T-cell (primary cell): ENCODE measurements at regions of chr18 and their contacts with region 1.

Region 1: GRCh38 chr18:2994603-2995432 is 18.1 kb downstream of the LPIN2 start:
- DNase-seq: peak in 34 of 35 experiments; percentile 48 to 85 (median 72)
- ATAC-seq: peak; percentile 82 to 86 (median 85)
- H3K4me3 ChIP-seq: peak overlapping the region in 1 of 2 donors; percentile 7
- H3K4me3 Mint-ChIP-seq: peak overlapping the region; percentile 41 to 43 (median 43)
- H3K27ac ChIP-seq: peak overlapping the region; percentile 60
- H3K27ac Mint-ChIP-seq: peak overlapping the region; percentile 75 to 89
- H3K4me1 ChIP-seq: peaks cover 31 to 40% of the 10 kb centered on the region in 2 experiments
- H3K4me1 Mint-ChIP-seq: peaks cover 74 to 90% (median 82%) of the 10 kb centered on the region in 3 donors
- H3K27me3 ChIP-seq: no peaks in the 10 kb centered on the region
- H3K27me3 Mint-ChIP-seq: no peaks in the 10 kb centered on the region

Region 2: DNA sequence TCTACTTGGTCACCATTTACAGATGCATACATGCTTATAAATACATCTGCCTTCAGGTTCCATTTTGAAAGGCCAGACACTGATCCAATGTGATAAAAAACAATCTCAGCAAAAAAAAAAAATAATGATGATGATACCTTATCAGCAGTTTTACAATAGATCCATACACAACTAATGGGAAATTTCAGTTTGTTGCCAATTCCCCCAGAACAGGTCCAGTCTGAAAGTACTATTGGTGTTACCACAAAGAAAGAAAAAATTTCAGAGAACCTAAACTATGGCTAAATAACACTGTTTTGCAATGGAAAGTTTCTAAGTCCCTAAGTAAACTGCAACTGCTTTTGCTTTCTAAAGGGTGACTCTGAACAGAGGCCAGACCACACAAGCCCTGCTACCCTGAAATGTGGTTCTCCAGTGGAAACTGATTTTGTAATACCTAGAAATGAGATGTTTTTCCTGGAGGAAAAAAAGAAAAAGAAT is 36.0 kb before region 1 on chr18:
- CTCF ChIA-PET with region 1: interaction called in 1 of 2 experiments, 197 read pairs
- POLR2A ChIA-PET with region 1: interaction called, 4 read pairs
- DNase-seq: peak in 1 of 35 experiments; percentile 53
- ATAC-seq: peak in 1 of 4 experiments; percentile 18
- H3K4me3 ChIP-seq: no peak overlapping the region
- H3K4me3 Mint-ChIP-seq: peak overlapping the region; percentile 46 to 72 (median 62)
- H3K27ac ChIP-seq: peak overlapping the region; percentile 94
- H3K27ac Mint-ChIP-seq: peak overlapping the region; percentile 95
- H3K4me1 ChIP-seq: peaks cover 67 to 77% of the 10 kb centered on the region in 2 experiments
- H3K4me1 Mint-ChIP-seq: peaks cover 91 to 95% (median 94%) of the 10 kb centered on the region in 3 donors
- H3K27me3 ChIP-seq: no peaks in the 10 kb centered on the region
- H3K27me3 Mint-ChIP-seq: no peaks in the 10 kb centered on the region

Region 3: DNA sequence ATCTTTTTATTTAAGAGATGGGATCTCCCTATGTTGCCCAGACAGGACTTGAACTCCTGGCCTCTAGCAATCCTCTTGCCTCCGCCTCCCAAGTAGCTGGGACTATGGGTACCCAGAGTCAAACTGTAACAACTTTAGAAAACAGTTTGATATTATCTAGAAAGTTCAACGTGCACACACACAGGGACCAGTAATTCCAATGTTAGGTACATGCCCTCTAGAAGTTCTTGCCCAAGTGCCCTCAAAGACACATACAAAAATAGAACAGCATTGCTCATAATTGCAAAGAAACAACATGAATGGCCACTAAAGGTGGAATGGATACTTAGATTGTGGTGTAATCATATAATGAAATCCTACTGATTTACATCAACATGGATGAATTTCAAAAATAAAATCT is 30.7 kb after region 1 on chr18:
- CTCF ChIA-PET with region 1: no interaction called
- POLR2A ChIA-PET with region 1: no interaction called
- DNase-seq: no peak
- ATAC-seq: no peak
- H3K4me3 ChIP-seq: no peak overlapping the region
- H3K4me3 Mint-ChIP-seq: no peak overlapping the region
- H3K27ac ChIP-seq: no peak overlapping the region
- H3K27ac Mint-ChIP-seq: no peak overlapping the region
- H3K4me1 ChIP-seq: no peaks in the 10 kb centered on the region
- H3K4me1 Mint-ChIP-seq: no peaks in the 10 kb centered on the region
- H3K27me3 ChIP-seq: no peaks in the 10 kb centered on the region
- H3K27me3 Mint-ChIP-seq: no peaks in the 10 kb centered on the region

Region 4: DNA sequence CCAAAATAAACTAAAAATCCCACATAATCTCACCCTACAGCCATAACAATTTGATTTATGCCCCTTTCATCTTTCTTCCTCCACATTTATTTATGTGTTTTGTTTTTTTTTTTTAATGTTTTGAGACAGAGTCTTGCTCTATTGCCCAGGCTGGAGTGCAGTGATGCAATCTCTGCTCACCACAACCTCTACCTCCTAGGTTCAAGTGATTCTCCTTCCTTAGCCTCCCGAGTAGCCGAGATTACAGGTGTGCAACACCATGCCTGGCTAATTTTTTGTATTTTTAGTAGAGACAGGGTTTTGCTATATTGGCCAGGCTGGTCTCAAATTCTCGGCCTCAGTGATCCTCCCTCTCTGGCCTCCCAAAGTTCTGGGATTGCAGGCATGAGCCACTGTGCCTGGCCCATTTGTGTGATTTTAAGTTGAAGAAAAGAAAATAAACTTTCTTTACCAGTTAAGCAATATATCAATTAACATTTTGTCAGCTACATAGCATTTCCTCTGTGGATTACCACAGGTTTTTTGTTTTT is 54.1 kb after region 1 on chr18:
- CTCF ChIA-PET with region 1: no interaction called
- POLR2A ChIA-PET with region 1: no interaction called
- DNase-seq: no peak
- ATAC-seq: no peak
- H3K4me3 ChIP-seq: no peak overlapping the region
- H3K4me3 Mint-ChIP-seq: no peak overlapping the region
- H3K27ac ChIP-seq: no peak overlapping the region
- H3K27ac Mint-ChIP-seq: no peak overlapping the region
- H3K4me1 ChIP-seq: peaks cover 8 to 9% of the 10 kb centered on the region in 2 experiments
- H3K4me1 Mint-ChIP-seq: peaks cover 26 to 58% (median 37%) of the 10 kb centered on the region in 3 donors
- H3K27me3 ChIP-seq: no peaks in the 10 kb centered on the region
- H3K27me3 Mint-ChIP-seq: no peaks in the 10 kb centered on the region

Region 5: DNA sequence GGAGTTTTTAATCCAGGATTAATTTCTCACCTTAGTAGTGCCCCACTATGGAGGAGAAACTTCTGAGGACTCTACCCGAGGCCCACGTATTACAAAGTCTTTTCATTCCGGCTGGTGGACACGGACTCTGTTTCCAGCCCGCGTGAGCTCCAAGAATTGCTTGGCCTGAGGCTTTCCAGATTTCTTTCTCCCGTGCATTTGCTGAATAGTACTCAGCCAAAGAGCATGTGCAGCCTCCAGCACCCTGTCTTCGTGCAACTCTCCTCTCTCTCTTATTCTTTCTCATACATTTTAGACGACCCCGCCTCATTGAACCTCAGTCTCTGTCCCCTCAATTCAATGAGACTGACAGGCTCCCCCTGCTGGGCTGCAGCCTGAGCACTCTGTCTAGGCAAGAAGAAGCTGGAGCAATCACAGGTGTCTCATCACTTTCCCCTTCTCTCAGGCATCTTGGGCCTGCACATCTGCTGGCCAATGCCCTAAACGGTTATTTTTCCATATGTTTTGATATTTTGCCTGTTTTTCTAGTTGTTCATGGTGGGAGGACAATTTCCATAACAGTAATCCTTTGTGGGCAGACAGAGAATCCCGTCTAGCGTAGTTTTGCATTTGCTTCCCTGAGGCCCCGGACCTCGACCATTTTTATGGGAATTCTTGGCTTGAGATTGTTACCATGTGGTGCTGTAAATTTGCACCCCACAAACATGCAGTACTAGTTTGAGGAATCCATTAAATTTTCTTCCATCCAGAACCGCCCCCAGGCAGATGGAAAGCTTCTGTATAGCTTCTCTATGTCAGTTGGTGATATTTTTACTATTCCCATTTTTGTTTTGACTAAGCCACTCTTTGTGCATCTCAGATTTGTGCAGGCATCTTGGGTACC is 68.2 kb after region 1 on chr18:
- CTCF ChIA-PET with region 1: interaction called, 70 to 89 read pairs
- POLR2A ChIA-PET with region 1: interaction called, 3 to 8 read pairs
- DNase-seq: peak; percentile 38 to 79 (median 66)
- ATAC-seq: peak; percentile 48 to 59 (median 54)
- H3K4me3 ChIP-seq: peak overlapping the region in 1 of 2 donors; percentile 10
- H3K4me3 Mint-ChIP-seq: peak overlapping the region; percentile 51 to 81 (median 72)
- H3K27ac ChIP-seq: peak overlapping the region; percentile 100
- H3K27ac Mint-ChIP-seq: peak overlapping the region; percentile 92 to 96
- H3K4me1 ChIP-seq: peaks cover 48 to 64% of the 10 kb centered on the region in 2 experiments
- H3K4me1 Mint-ChIP-seq: peaks cover 70 to 73% (median 73%) of the 10 kb centered on the region in 3 donors
- H3K27me3 ChIP-seq: no peaks in the 10 kb centered on the region
- H3K27me3 Mint-ChIP-seq: no peaks in the 10 kb centered on the region

Region 6: DNA sequence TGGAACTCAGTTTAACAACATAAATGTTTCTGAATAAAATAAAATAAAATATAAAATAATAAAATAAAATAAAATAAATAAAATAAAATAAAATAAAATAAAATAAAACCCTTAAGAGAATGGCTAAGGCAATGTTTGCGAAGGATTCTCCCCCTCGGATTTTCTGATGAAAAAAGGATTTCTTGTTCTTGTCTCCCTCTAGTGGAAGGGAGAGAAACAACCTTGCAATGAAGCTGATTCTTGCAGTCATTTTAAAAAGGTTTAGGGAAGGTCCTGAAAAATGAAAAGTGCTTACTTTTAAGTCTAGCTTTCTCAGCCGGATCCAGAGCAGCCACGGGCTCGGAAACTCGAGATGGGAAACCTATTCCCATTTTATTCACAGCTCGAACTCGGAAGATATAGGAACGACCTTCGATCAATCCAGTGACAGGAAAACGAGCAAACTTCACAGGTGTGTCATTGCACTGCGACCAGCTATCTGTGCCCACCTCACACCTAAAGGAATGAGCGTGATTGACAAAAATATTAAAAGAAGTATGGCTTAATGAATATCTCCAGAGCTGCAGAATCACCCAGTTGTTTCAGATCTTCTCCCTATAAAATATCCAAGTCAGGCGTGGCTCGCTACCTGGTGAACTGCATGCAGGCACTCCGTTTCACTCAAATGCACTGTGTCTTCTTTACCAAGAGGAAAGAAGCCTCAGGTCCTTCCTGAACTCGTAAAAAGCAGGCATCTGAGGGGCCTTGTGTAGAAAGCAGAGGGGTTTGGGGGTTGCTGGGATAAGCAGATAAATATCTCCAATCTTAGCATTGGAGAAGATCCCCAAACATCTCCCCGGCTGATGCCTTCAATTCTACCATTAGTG is 156.8 kb after region 1 on chr18:
- CTCF ChIA-PET with region 1: interaction called, 35 to 42 read pairs
- POLR2A ChIA-PET with region 1: interaction called in 1 of 2 experiments, 3 read pairs
- DNase-seq: peak in 1 of 35 experiments; percentile 60
- ATAC-seq: no peak
- H3K4me3 ChIP-seq: no peak overlapping the region
- H3K4me3 Mint-ChIP-seq: no peak overlapping the region
- H3K27ac ChIP-seq: no peak overlapping the region
- H3K27ac Mint-ChIP-seq: no peak overlapping the region
- H3K4me1 ChIP-seq: peaks cover 0 to 2% of the 10 kb centered on the region in 2 experiments
- H3K4me1 Mint-ChIP-seq: peaks cover 0 to 10% (median 6%) of the 10 kb centered on the region in 3 donors
- H3K27me3 ChIP-seq: no peaks in the 10 kb centered on the region
- H3K27me3 Mint-ChIP-seq: no peaks in the 10 kb centered on the region